Transverse colon (tissue), 4 donors: ENCODE measurements at regions of chr15 and their contacts with region 1.

Region 1: DNA sequence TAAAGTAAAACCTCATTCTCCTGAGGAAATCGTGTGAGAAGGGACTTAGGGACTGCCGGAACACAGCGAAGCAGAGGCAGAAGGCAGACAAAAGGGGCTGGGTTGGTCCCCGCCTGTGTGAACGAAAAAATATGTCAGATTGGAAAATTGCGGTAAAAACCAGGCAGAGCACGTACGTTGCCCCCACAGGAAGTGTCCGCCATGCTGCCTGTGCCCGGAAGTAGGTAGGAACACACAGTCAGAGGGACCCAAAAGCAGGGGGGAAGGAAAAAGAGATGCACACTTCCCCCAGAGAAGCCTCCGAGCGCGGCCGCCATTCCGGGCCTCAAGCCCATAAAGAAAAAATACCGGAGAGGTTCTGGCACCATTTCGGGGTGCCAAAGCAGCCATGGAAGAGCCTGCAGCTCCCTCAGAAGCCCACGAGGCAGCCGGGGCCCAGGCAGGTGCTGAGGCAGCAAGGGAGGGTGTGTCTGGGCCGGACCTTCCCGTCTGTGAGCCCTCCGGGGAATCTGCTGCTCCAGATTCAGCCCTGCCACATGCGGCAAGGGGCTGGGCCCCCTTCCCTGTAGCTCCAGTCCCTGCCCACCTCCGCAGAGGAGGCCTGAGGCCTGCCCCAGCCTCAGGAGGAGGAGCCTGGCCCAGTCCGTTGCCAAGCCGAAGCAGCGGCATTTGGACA is at the start of gene MKRN3:
- DNase-seq: peak; percentile 18
- H3K4me3 ChIP-seq: peak within 1 kb of the TSS in 3 of 4 donors; percentile 3 to 7 (median 4)
- H3K27ac ChIP-seq: peak within 1 kb of the TSS in 2 of 4 donors; percentile 51 to 54
- H3K4me1 ChIP-seq: peaks cover 0 to 4% (median 0%) of the 10 kb centered on the region in 4 donors
- H3K27me3 ChIP-seq: peaks cover 6% of the 10 kb centered on the region
- CTCF ChIP-seq: no peak
- EP300 ChIP-seq: no peak
- POLR2A ChIP-seq: no peak
- total RNA-seq, gene MKRN3: 0.14 to 3.2 (median 0.80) TPM in 3 of 4 donors, not detected in the other

Region 2: GRCh38 chr15:23503576-23503975 is 62.0 kb before region 1 on chr15:
- in situ Hi-C with region 1: loop called in 1 of 4 experiments (anchors 10 kb)
- intact Hi-C with region 1: no loop called
- DNase-seq: no peak
- H3K4me3 ChIP-seq: no peak overlapping the region
- H3K27ac ChIP-seq: no peak overlapping the region
- H3K4me1 ChIP-seq: no peaks in the 10 kb centered on the region
- H3K27me3 ChIP-seq: no peaks in the 10 kb centered on the region
- CTCF ChIP-seq: no peak
- EP300 ChIP-seq: no peak
- POLR2A ChIP-seq: no peak